MCF 10A (cell line): ENCODE measurements at regions of chr10 and their contacts with region 1.

Region 1: DNA sequence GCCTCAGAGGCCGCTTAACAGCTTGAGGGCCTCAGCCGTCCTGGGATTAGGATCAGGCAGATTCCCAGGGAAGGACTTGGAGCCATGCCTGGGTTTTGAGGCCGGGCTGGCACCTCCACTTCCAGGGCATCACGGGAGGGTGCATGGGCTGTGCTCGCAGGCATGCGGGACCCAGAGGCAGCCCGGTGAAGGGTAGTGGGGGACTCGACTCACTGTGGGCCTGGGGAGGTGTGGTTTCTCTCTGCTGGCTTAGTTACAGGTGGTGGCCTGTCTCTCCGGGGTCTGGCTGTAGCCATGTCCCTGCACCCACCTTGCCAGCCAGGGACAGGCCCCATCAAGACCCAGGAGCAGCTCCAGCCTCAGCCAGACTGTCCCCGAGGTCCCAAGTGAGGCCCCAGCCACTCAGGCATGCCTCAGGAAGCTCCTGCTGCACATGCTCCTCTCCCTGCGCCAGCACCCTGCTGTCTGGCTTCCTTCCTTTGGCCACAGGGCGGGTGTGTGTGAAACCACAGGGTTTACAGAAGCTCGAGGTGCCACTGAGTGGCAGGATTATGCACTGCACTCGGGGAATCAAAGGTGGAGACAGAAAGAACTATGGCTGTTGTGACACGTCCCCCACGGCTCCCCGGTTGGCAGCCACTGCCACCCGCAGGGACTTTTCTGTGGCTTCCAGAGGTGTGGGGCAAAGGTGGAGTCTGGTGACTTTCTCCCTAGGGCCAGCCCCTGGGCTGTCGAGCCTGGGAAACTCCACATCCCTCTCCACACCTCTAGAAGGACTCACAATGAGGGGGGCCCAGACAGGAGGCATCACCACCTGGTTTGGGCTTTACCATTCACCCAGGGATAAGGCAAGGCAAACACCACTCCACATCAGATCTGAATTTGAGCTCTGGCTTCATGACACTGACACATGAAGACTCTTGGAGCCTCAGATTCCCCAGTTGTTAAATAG is 19.7 kb downstream of the GOLGA7B start:
- DNase-seq: peak; percentile 93
- H3K4me3 Mint-ChIP-seq: no peak overlapping the region
- H3K27ac Mint-ChIP-seq: no peak overlapping the region
- H3K4me1 Mint-ChIP-seq: no peaks in the 10 kb centered on the region
- H3K27me3 Mint-ChIP-seq: no peaks in the 10 kb centered on the region
- CTCF ChIP-seq: peak; percentile 83

Region 2: DNA sequence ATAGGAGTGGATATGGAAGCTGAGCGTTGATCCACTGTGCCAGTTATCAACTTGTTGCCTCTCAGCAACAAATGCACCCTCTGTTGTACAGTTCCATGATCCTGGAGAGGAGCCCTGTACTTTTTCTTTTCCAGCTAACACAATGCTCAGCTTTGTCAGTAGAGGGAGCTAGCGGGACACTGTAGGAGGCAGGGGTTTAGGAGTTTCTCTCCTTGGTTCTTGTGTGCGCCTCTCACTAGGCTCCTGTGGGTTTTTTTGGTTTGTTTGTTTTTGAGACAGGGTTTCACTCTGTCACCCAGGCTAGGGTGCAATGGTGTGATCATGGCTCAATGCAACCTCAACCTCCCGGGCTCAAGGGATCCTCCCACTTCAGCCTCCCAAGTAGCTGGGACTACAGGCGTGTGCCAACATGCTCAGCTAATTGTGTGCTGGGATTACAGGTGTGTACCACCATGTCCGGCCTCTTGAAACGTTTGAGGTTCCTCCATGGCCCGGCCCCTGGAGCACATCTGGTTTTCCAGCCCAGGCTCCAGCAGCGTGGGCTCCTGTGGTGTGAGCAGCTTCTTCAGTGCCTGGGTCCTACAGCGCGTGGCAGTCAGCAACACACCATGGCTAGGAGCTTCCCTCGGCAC is 167.8 kb before region 1 on chr10:
- CTCF ChIA-PET with region 1: interaction called, 14 read pairs
- POLR2A ChIA-PET with region 1: no interaction called
- intact Hi-C with region 1: no loop called
- DNase-seq: peak; percentile 88
- H3K4me3 Mint-ChIP-seq: no peak overlapping the region
- H3K27ac Mint-ChIP-seq: no peak overlapping the region
- H3K4me1 Mint-ChIP-seq: peaks cover 8% of the 10 kb centered on the region
- H3K27me3 Mint-ChIP-seq: no peaks in the 10 kb centered on the region
- CTCF ChIP-seq: peak; percentile 80

Region 3: DNA sequence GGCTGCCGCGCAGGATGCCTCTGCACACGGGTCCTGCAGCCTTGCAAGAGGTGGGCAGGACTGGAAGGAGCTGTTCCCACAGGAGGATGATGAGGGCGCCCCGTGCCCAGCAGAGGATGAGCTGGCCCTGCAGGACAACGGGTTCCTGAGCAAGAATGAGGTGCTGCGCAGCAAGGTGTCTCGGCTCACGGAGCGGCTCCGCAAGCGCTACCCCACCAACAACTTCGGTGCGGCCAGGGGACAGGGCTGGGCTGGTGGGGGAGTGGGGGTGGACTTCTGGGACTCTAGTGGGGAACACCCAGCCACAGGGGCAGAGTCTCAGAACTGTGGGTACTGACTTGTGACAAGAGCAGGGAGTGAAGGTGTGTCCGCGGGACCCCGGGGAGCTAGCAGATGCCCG is 116.4 kb before region 1 on chr10:
- CTCF ChIA-PET with region 1: interaction called, 16 read pairs
- POLR2A ChIA-PET with region 1: no interaction called
- intact Hi-C with region 1: no loop called
- DNase-seq: no peak
- H3K4me3 Mint-ChIP-seq: no peak overlapping the region
- H3K27ac Mint-ChIP-seq: no peak overlapping the region
- H3K4me1 Mint-ChIP-seq: no peaks in the 10 kb centered on the region
- H3K27me3 Mint-ChIP-seq: no peaks in the 10 kb centered on the region
- CTCF ChIP-seq: no peak

Region 4: GRCh38 chr10:97759158-97759887 is 110.0 kb before region 1 on chr10:
- CTCF ChIA-PET with region 1: interaction called, 33 read pairs
- POLR2A ChIA-PET with region 1: no interaction called
- intact Hi-C with region 1: loop called (anchors 1 kb)
- DNase-seq: peak; percentile 67
- H3K4me3 Mint-ChIP-seq: no peak overlapping the region
- H3K27ac Mint-ChIP-seq: no peak overlapping the region
- H3K4me1 Mint-ChIP-seq: no peaks in the 10 kb centered on the region
- H3K27me3 Mint-ChIP-seq: no peaks in the 10 kb centered on the region
- CTCF ChIP-seq: peak; percentile 77

Region 5: DNA sequence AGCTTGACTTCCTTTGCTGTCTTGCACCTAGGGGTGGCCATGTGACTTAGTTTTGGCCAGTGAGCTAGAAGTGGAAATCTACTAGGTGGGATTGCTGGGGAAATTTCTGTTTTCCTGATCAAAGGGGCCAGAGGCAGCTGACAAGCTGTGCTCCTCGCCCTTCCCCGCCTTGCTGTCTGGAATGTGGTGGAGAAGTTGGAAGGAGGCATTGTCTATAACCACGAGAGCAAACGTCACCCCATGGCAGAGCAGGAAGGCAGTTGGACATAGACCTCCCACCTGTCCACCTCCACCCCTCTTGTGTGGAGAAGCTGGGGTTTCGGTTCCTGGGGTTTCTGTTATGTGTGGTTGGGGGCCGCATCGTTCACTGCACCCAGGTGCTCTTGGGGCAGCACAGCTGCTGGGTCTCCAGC is 104.8 kb before region 1 on chr10:
- CTCF ChIA-PET with region 1: interaction called, 33 read pairs
- POLR2A ChIA-PET with region 1: no interaction called
- intact Hi-C with region 1: loop called (anchors 1 kb)
- DNase-seq: no peak
- H3K4me3 Mint-ChIP-seq: no peak overlapping the region
- H3K27ac Mint-ChIP-seq: no peak overlapping the region
- H3K4me1 Mint-ChIP-seq: no peaks in the 10 kb centered on the region
- H3K27me3 Mint-ChIP-seq: peaks cover 3% of the 10 kb centered on the region
- CTCF ChIP-seq: no peak

Region 6: DNA sequence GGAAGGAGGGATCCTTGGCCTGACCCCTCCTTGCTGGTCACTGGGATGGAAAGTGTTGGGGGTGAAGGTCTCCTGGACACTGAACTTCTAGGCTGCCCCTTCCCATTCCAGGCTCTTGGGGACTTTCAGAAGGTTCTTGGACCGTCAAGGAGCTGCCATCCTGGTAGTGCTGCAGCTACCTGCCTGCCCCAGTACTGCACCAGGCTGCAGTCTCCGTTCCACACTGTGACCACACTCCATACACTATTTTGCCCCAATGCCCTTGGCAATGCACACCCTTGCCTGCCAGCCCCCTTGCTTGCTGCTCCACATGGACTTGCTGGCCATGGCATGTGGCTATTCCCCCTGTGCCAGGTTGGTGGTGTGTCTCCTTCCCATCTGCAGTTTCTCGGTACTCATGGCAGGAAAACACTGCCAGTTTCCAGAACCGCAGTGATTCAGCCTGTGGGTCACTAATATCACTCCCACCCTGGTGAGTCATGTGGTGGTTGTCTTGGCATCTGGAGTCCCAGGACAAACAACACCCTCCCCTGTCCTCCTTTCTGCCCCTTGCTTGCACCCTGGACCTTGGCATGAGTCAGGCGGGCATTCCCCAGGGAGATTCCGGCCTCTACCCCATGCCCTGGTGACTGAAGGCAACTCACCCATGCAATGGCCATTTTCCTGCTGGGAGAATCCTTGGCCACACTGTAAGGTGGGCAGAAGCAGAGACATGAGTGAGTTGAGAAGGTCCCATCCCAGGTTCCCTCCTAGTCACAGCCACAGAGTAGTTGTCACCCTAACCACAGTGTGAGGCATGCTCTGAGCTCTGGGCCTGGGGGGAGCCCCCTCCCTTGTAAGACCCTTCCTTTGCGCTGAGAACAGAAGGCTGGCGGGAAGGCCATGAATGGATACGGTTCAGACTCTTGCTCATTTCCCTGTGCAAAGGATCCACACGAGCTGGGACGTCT is 13.1 kb after region 1 on chr10:
- CTCF ChIA-PET with region 1: interaction called, 34 read pairs
- POLR2A ChIA-PET with region 1: interaction called, 3 read pairs
- intact Hi-C with region 1: no loop called
- DNase-seq: peak; percentile 98
- H3K4me3 Mint-ChIP-seq: peak overlapping the region; percentile 8
- H3K27ac Mint-ChIP-seq: peak overlapping the region; percentile 62
- H3K4me1 Mint-ChIP-seq: peaks cover 14% of the 10 kb centered on the region
- H3K27me3 Mint-ChIP-seq: no peaks in the 10 kb centered on the region
- CTCF ChIP-seq: no peak

Region 7: GRCh38 chr10:97999066-97999922 is 129.9 kb after region 1 on chr10:
- CTCF ChIA-PET with region 1: no interaction called
- POLR2A ChIA-PET with region 1: no interaction called
- intact Hi-C with region 1: no loop called
- DNase-seq: no peak
- H3K4me3 Mint-ChIP-seq: no peak overlapping the region
- H3K27ac Mint-ChIP-seq: no peak overlapping the region
- H3K4me1 Mint-ChIP-seq: no peaks in the 10 kb centered on the region
- H3K27me3 Mint-ChIP-seq: no peaks in the 10 kb centered on the region
- CTCF ChIP-seq: no peak

Region 8: GRCh38 chr10:98956576-98957260 is 1087.4 kb after region 1 on chr10:
- CTCF ChIA-PET with region 1: no interaction called
- POLR2A ChIA-PET with region 1: no interaction called
- intact Hi-C with region 1: no loop called
- DNase-seq: no peak
- H3K4me3 Mint-ChIP-seq: no peak overlapping the region
- H3K27ac Mint-ChIP-seq: no peak overlapping the region
- H3K4me1 Mint-ChIP-seq: no peaks in the 10 kb centered on the region
- H3K27me3 Mint-ChIP-seq: no peaks in the 10 kb centered on the region
- CTCF ChIP-seq: no peak